ENCODE measurements at regions of chr3 and their contacts with region 1.

Region 1: GRCh38 chr3:52313774-52314188 is 2.3 kb upstream of the DNAH1 start:
- DNase-seq: peak; percentile 79
- ATAC-seq: peak; percentile 68
- H3K4me3 ChIP-seq: no peak overlapping the region
- H3K4me3 Mint-ChIP-seq: peak overlapping the region; percentile 76
- H3K27ac ChIP-seq: peak overlapping the region; percentile 65 to 82
- H3K27ac Mint-ChIP-seq: peak overlapping the region; percentile 94
- H3K4me1 ChIP-seq: peaks cover 36 to 61% of the 10 kb centered on the region in 2 donors
- H3K4me1 Mint-ChIP-seq: peaks cover 66% of the 10 kb centered on the region
- H3K27me3 ChIP-seq: no peaks in the 10 kb centered on the region
- H3K27me3 Mint-ChIP-seq: no peaks in the 10 kb centered on the region
- CTCF ChIP-seq: no peak

Region 2: GRCh38 chr3:52262447-52262846 is 51.3 kb before region 1 on chr3:
- CTCF ChIA-PET with region 1: no interaction called
- POLR2A ChIA-PET with region 1: no interaction called
- intact Hi-C with region 1: no loop called
- DNase-seq: peak; percentile 36
- ATAC-seq: peak; percentile 31
- H3K4me3 ChIP-seq: peak overlapping the region in 2 of 5 experiments; percentile 17 to 27
- H3K4me3 Mint-ChIP-seq: peak overlapping the region; percentile 57
- H3K27ac ChIP-seq: peak overlapping the region; percentile 51 to 64
- H3K27ac Mint-ChIP-seq: peak overlapping the region; percentile 80
- H3K4me1 ChIP-seq: peaks cover 23 to 37% of the 10 kb centered on the region in 2 donors
- H3K4me1 Mint-ChIP-seq: peaks cover 38% of the 10 kb centered on the region
- H3K27me3 ChIP-seq: no peaks in the 10 kb centered on the region
- H3K27me3 Mint-ChIP-seq: no peaks in the 10 kb centered on the region
- CTCF ChIP-seq: no peak

Region 3: DNA sequence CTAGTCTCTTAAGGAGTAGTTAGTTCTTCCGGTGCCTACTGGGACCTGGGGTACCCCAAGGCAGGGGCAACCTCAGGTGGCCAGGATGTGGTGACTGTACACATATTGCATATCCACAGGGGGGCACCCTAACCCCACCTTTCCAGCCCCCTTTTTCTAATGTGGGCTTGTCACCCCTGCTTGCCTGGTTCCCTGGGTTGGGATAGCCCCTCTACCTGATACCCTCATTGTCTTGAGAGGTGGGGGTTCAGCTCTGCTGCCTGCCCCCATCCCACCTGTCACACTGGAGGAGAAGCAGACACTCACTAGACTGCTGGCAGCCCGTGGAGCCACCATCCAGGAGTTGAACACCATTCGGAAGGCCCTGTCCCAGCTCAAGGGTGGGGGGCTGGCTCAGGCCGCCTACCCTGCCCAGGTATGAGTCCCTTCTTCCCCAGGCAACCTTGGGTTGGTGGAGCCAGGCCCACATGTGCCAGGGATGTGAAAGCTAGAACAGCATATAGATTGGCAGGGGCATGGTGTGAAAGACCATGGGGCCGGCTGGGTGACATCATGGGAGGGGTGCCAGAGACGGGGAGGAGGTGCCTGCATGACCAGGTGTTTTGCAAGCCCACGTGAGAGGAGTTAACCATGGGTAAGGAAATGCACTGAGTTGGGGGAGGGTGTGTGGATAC is 22.1 kb before region 1 on chr3:
- CTCF ChIA-PET with region 1: interaction called, 8 read pairs
- POLR2A ChIA-PET with region 1: interaction called, 4 read pairs
- intact Hi-C with region 1: loop called (anchors 1 kb)
- DNase-seq: peak; percentile 65
- ATAC-seq: peak; percentile 31
- H3K4me3 ChIP-seq: no peak overlapping the region
- H3K4me3 Mint-ChIP-seq: peak overlapping the region; percentile 37
- H3K27ac ChIP-seq: no peak overlapping the region
- H3K27ac Mint-ChIP-seq: peak overlapping the region; percentile 33
- H3K4me1 ChIP-seq: peaks cover 12 to 15% of the 10 kb centered on the region in 2 donors
- H3K4me1 Mint-ChIP-seq: peaks cover 30% of the 10 kb centered on the region
- H3K27me3 ChIP-seq: no peaks in the 10 kb centered on the region
- H3K27me3 Mint-ChIP-seq: no peaks in the 10 kb centered on the region
- CTCF ChIP-seq: peak; percentile 69

Region 4: GRCh38 chr3:52299879-52300611 is 13.7 kb before region 1 on chr3:
- CTCF ChIA-PET with region 1: interaction called, 3 read pairs
- POLR2A ChIA-PET with region 1: interaction called, 12 read pairs
- intact Hi-C with region 1: no loop called
- DNase-seq: no peak
- ATAC-seq: peak; percentile 50
- H3K4me3 ChIP-seq: no peak overlapping the region
- H3K4me3 Mint-ChIP-seq: no peak overlapping the region
- H3K27ac ChIP-seq: no peak overlapping the region
- H3K27ac Mint-ChIP-seq: peak overlapping the region; percentile 41
- H3K4me1 ChIP-seq: peaks cover 0 to 16% of the 10 kb centered on the region in 2 donors
- H3K4me1 Mint-ChIP-seq: peaks cover 21% of the 10 kb centered on the region
- H3K27me3 ChIP-seq: no peaks in the 10 kb centered on the region
- H3K27me3 Mint-ChIP-seq: no peaks in the 10 kb centered on the region
- CTCF ChIP-seq: no peak